CD8-positive, alpha-beta T cell (primary cell): ENCODE measurements at regions of chr6 and their contacts with region 1.

Region 1: GRCh38 chr6:116680975-116681808 is at the start of gene KPNA5:
- DNase-seq: peak; percentile 85 to 96 (median 92)
- ATAC-seq: peak; percentile 93
- H3K4me3 ChIP-seq: peak within 1 kb of the TSS; percentile 95 to 97
- H3K4me3 Mint-ChIP-seq: peak within 1 kb of the TSS; percentile 96
- H3K27ac ChIP-seq: peak within 1 kb of the TSS; percentile 93 to 94
- H3K27ac Mint-ChIP-seq: peak within 1 kb of the TSS; percentile 99
- H3K4me1 ChIP-seq: peaks cover 17% of the 10 kb centered on the region
- H3K4me1 Mint-ChIP-seq: peaks cover 50% of the 10 kb centered on the region
- H3K27me3 ChIP-seq: no peaks in the 10 kb centered on the region
- H3K27me3 Mint-ChIP-seq: no peaks in the 10 kb centered on the region
- CTCF ChIP-seq: no peak
- total RNA-seq, gene KPNA5: 56.3 to 57.4 TPM

Region 2: GRCh38 chr6:116253505-116254296 is 427.5 kb before region 1 on chr6 and contains the start of gene TSPYL4:
- CTCF ChIA-PET with region 1: no interaction called
- POLR2A ChIA-PET with region 1: no interaction called
- intact Hi-C with region 1: loop called in 1 of 2 experiments (anchors 1 kb)
- DNase-seq: peak; percentile 83 to 98 (median 91)
- ATAC-seq: peak; percentile 94
- H3K4me3 ChIP-seq: peak within 1 kb of the TSS; percentile 89 to 91
- H3K4me3 Mint-ChIP-seq: no peak within 1 kb of the TSS
- H3K27ac ChIP-seq: peak within 1 kb of the TSS; percentile 95 to 98
- H3K27ac Mint-ChIP-seq: no peak within 1 kb of the TSS
- H3K4me1 ChIP-seq: peaks cover 37% of the 10 kb centered on the region
- H3K4me1 Mint-ChIP-seq: peaks cover 26% of the 10 kb centered on the region
- H3K27me3 ChIP-seq: no peaks in the 10 kb centered on the region
- H3K27me3 Mint-ChIP-seq: no peaks in the 10 kb centered on the region
- CTCF ChIP-seq: no peak
- total RNA-seq, gene TSPYL4: 51.0 to 51.6 TPM

Region 3: GRCh38 chr6:116461932-116462885 is 219.0 kb before region 1 on chr6:
- CTCF ChIA-PET with region 1: no interaction called
- POLR2A ChIA-PET with region 1: no interaction called
- intact Hi-C with region 1: no loop called
- DNase-seq: peak; percentile 4 to 82 (median 51)
- ATAC-seq: peak; percentile 91
- H3K4me3 ChIP-seq: peak overlapping the region; percentile 44 to 54
- H3K4me3 Mint-ChIP-seq: peak overlapping the region; percentile 79
- H3K27ac ChIP-seq: no peak overlapping the region
- H3K27ac Mint-ChIP-seq: peak overlapping the region; percentile 24
- H3K4me1 ChIP-seq: peaks cover 14% of the 10 kb centered on the region
- H3K4me1 Mint-ChIP-seq: peaks cover 30% of the 10 kb centered on the region
- H3K27me3 ChIP-seq: no peaks in the 10 kb centered on the region
- H3K27me3 Mint-ChIP-seq: peaks cover 10% of the 10 kb centered on the region
- CTCF ChIP-seq: no peak

Region 4: DNA sequence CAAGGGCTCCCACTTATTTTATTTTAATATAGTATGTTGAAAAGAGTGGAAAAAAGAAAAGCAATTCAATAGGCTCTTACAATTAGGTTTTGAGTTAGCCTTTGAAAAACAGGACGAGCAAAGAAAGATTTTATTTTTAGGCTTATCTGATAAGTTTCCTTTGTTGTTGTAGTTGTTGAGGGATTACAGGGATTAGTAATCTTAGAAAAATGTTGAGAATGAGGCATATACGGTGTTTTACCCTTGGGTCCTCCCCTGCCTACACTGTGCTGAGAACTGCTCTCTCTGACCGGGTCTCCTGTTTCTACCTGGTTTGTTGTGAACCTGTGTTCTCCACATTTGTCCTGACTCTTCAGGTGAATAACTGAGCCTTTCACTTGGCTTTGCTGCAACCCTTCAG is 152.4 kb before region 1 on chr6:
- CTCF ChIA-PET with region 1: no interaction called
- POLR2A ChIA-PET with region 1: no interaction called
- intact Hi-C with region 1: no loop called
- DNase-seq: no peak
- ATAC-seq: no peak
- H3K4me3 ChIP-seq: no peak overlapping the region
- H3K4me3 Mint-ChIP-seq: no peak overlapping the region
- H3K27ac ChIP-seq: no peak overlapping the region
- H3K27ac Mint-ChIP-seq: no peak overlapping the region
- H3K4me1 ChIP-seq: no peaks in the 10 kb centered on the region
- H3K4me1 Mint-ChIP-seq: no peaks in the 10 kb centered on the region
- H3K27me3 ChIP-seq: no peaks in the 10 kb centered on the region
- H3K27me3 Mint-ChIP-seq: peaks cover 9% of the 10 kb centered on the region
- CTCF ChIP-seq: no peak

Region 5: GRCh38 chr6:116667623-116668022 is 13.6 kb before region 1 on chr6:
- CTCF ChIA-PET with region 1: interaction called, 6 read pairs
- POLR2A ChIA-PET with region 1: interaction called, 26 read pairs
- intact Hi-C with region 1: loop called (anchors 1 kb)
- DNase-seq: no peak
- ATAC-seq: no peak
- H3K4me3 ChIP-seq: peak overlapping the region; percentile 71 to 83
- H3K4me3 Mint-ChIP-seq: peak overlapping the region; percentile 99
- H3K27ac ChIP-seq: peak overlapping the region; percentile 70 to 84
- H3K27ac Mint-ChIP-seq: no peak overlapping the region
- H3K4me1 ChIP-seq: peaks cover 33% of the 10 kb centered on the region
- H3K4me1 Mint-ChIP-seq: peaks cover 44% of the 10 kb centered on the region
- H3K27me3 ChIP-seq: no peaks in the 10 kb centered on the region
- H3K27me3 Mint-ChIP-seq: no peaks in the 10 kb centered on the region
- CTCF ChIP-seq: no peak

Region 6: GRCh38 chr6:116726947-116727346 is 45.8 kb after region 1 on chr6:
- CTCF ChIA-PET with region 1: no interaction called
- POLR2A ChIA-PET with region 1: no interaction called
- intact Hi-C with region 1: loop called in 1 of 2 experiments (anchors 5 kb)
- DNase-seq: no peak
- ATAC-seq: no peak
- H3K4me3 ChIP-seq: no peak overlapping the region
- H3K4me3 Mint-ChIP-seq: no peak overlapping the region
- H3K27ac ChIP-seq: no peak overlapping the region
- H3K27ac Mint-ChIP-seq: no peak overlapping the region
- H3K4me1 ChIP-seq: no peaks in the 10 kb centered on the region
- H3K4me1 Mint-ChIP-seq: no peaks in the 10 kb centered on the region
- H3K27me3 ChIP-seq: no peaks in the 10 kb centered on the region
- H3K27me3 Mint-ChIP-seq: no peaks in the 10 kb centered on the region
- CTCF ChIP-seq: no peak

Region 7: GRCh38 chr6:116812051-116812650 is 131.0 kb after region 1 on chr6:
- CTCF ChIA-PET with region 1: no interaction called
- POLR2A ChIA-PET with region 1: no interaction called
- intact Hi-C with region 1: no loop called
- DNase-seq: no peak
- ATAC-seq: no peak
- H3K4me3 ChIP-seq: no peak overlapping the region
- H3K4me3 Mint-ChIP-seq: no peak overlapping the region
- H3K27ac ChIP-seq: no peak overlapping the region
- H3K27ac Mint-ChIP-seq: no peak overlapping the region
- H3K4me1 ChIP-seq: no peaks in the 10 kb centered on the region
- H3K4me1 Mint-ChIP-seq: no peaks in the 10 kb centered on the region
- H3K27me3 ChIP-seq: no peaks in the 10 kb centered on the region
- H3K27me3 Mint-ChIP-seq: peaks cover 3% of the 10 kb centered on the region
- CTCF ChIP-seq: no peak